Esophagus muscularis mucosa (tissue), 4 donors: ENCODE measurements at regions of chr16 and their contacts with region 1.

Region 1: DNA sequence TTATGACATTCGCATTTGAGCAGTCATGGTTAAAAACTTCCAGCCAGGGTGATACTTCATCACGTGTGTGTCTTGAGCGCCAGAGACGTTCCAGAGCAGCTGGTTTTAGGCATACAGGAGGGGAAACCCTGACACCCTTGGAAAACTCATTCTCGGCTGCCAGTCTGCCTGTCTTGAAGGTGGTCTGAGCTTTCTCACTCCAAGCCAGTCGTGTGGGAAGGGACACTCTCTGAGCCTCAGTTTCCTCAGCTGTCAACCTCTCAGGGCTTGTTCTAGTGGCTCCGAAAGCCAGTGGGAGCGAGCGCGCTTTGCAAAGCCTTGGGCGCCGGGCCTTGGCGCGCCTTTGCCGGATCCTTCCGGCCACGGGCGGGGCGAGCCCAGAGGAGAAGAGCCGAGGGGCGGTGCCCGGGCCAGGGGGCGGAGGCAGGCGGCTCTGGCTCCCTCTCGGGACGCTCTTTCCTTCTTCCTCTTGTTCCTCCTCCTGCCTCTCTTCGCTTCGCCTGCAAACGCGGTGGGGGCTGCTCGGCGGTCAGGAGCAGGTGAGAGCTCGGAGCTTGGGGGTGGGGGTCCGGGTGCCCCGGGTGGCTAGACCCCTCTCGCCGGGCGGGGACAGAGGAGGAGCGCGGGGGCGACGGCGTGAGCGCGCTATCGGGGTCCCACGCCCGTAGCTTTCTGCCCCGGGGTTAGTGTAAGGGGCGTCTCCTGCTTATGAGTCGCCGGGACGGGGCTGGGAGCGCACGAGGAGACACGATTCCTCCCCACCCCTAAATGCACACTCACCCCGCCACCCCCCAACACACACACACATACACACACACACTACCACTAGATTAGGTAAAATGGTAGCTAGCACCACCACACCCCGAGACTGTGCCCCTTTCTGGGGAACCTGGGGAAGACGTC is at the start of gene LDAF1:
- DNase-seq: peak; percentile 94
- H3K4me3 ChIP-seq: peak within 1 kb of the TSS; percentile 75 to 97 (median 88)
- H3K27ac ChIP-seq: peak within 1 kb of the TSS; percentile 87 to 95 (median 92)
- H3K4me1 ChIP-seq: peaks cover 36 to 58% (median 57%) of the 10 kb centered on the region in 4 donors
- H3K27me3 ChIP-seq: no peaks in the 10 kb centered on the region
- CTCF ChIP-seq: peak in 2 of 3 experiments; percentile 16 to 18
- EP300 ChIP-seq: no peak
- POLR2A ChIP-seq: no peak
- total RNA-seq, gene LDAF1: 98.7 to 208 (median 141) TPM

Region 2: DNA sequence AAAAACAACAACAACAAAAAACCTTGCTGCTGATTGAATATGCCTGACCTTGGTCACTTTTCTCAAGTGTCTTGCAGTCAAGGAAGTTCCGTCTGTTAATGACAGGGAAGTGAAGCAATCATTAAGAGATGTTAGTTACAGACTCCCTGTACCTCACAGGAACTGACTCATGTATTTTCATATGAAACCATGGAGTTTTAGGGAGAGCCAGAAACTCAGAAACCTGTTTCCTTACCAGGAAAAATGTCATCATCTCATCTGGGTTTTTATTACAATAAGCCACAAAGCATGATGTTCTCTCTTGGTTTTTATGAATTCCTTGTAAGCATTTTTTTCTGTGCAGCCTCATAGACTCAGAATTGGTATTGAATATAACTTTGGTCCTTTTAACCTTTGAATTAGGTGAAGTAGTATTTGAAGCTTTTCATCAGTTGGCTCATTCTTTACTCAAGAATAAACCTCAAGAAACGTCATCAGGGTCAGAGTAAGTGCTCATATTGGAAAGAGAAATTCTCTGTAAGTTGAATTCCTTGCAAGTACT is 247.6 kb before region 1 on chr16:
- intact Hi-C with region 1: loop called (anchors 10 kb)
- DNase-seq: no peak
- H3K4me3 ChIP-seq: no peak overlapping the region
- H3K27ac ChIP-seq: peak overlapping the region; percentile 59 to 63 (median 61)
- H3K4me1 ChIP-seq: peaks cover 52 to 67% (median 60%) of the 10 kb centered on the region in 4 donors
- H3K27me3 ChIP-seq: no peaks in the 10 kb centered on the region
- CTCF ChIP-seq: no peak
- EP300 ChIP-seq: no peak
- POLR2A ChIP-seq: no peak

Region 3: GRCh38 chr16:22670551-22671041 is 1512.1 kb after region 1 on chr16:
- intact Hi-C with region 1: loop called (anchors 10 kb)
- DNase-seq: no peak
- H3K4me3 ChIP-seq: no peak overlapping the region
- H3K27ac ChIP-seq: no peak overlapping the region
- H3K4me1 ChIP-seq: peaks cover 7 to 33% (median 22%) of the 10 kb centered on the region in 4 donors
- H3K27me3 ChIP-seq: no peaks in the 10 kb centered on the region
- CTCF ChIP-seq: no peak
- EP300 ChIP-seq: no peak
- POLR2A ChIP-seq: no peak